ENCODE measurements at regions of chr1 and their contacts with region 1.

Region 1: DNA sequence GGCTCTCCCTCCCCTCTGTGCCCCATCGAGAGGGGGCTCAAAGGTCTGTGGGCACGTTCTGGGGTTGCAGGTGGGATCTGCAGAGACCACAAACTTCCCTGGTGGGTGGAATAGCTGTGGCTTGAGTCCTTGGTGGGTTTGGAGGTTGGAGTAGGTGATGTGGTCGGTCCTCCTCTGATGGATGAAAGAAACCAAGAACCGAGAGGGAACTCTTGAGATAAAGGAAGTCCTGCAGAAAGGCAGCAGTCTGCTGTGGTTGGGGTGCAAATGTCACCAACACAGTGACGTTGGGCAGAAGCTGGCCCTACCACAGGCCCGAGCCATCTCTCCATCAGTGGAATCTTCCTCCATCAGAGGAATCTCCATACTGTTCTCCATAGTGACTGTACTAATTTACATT is 171.8 kb downstream of the FCRL5 start:
- DNase-seq: no peak
- CTCF ChIP-seq: no peak

Region 2: DNA sequence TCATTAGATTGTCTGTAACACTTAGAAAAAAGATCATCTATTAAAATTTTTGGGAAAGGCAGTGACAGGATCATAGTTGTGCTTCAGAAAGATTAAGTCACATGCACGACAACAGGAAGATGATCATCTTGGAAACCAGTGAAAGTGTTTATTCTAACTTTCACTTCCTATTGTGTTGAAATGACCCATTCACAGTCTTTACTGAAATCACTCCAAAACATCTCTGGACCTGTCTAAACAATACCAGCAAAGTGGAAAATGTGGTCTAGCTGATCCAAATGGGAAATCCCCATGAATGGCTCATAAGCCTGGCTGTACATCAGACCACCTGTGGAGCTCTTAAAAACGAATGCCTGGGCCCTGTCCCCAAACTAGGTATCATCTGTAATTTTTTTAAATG is 131.2 kb before region 1 on chr1:
- CTCF ChIA-PET with region 1: no interaction called
- POLR2A ChIA-PET with region 1: no interaction called
- DNase-seq: peak; percentile 26
- CTCF ChIP-seq: no peak

Region 3: GRCh38 chr1:157325220-157325619 is 55.3 kb before region 1 on chr1:
- CTCF ChIA-PET with region 1: no interaction called
- POLR2A ChIA-PET with region 1: no interaction called
- DNase-seq: no peak
- CTCF ChIP-seq: no peak

Region 4: DNA sequence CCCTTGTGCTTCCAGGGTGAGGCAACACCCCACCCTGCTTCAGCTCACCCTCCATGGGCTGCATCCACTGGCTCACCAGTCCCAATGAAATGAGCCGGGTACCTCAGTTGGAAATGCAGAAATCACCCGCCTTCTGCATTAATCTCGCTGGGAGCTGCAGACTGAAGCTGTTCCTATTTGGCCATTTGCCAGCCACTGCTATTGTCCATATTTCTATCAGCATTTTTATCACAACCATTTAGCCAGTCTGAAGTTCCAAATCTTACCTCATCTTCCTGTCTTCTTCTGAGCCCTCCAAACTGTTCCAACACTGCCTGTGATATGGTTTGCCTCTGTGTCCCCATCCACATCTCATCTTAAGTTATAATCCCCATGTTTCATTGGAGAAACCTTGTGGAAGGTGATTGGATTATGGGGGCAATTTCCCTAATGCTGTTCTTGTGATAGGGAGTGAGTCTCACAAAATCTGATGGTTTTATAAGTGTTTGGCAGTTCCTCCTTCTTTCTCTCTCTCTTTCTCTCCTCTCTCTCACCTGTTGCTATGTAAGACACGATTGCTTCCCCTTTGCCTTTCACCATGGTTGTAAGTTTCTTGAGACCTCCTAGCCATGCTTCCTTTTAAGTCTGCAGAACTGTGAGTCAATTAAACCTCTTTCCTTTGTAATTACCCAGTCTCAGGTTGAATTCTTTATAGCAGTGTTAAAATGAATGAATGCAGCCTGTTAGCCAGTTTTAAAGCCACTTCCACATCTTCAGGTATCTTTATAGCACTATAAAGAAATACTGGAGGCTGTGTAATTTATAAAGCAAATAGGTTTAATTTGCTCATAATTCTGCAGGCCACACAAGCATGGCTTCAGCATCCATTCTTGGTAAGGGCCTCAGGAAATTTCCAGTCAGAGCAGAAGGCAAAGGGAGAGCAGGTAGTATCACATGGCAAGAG is 31.7 kb before region 1 on chr1:
- CTCF ChIA-PET with region 1: interaction called, 10 read pairs
- POLR2A ChIA-PET with region 1: no interaction called
- DNase-seq: no peak
- CTCF ChIP-seq: no peak

Region 5: GRCh38 chr1:157472056-157472698 is 91.7 kb after region 1 on chr1:
- CTCF ChIA-PET with region 1: no interaction called
- POLR2A ChIA-PET with region 1: no interaction called
- DNase-seq: no peak
- CTCF ChIP-seq: no peak

Region 6: GRCh38 chr1:157831968-157832626 is 451.6 kb after region 1 on chr1:
- CTCF ChIA-PET with region 1: no interaction called
- POLR2A ChIA-PET with region 1: no interaction called
- DNase-seq: no peak
- CTCF ChIP-seq: no peak

Measured in GM10248 (cell line).